ENCODE measurements at regions of chr2 and their contacts with region 1.

Region 1: GRCh38 chr2:97718051-97718882 is 4.9 kb downstream of the ZAP70 start:
- DNase-seq: peak; percentile 86
- ATAC-seq: peak; percentile 77
- H3K4me3 Mint-ChIP-seq: peak overlapping the region; percentile 71
- H3K27ac Mint-ChIP-seq: peak overlapping the region; percentile 95
- H3K4me1 Mint-ChIP-seq: peaks cover 68% of the 10 kb centered on the region
- H3K27me3 Mint-ChIP-seq: no peaks in the 10 kb centered on the region

Region 2: GRCh38 chr2:97740590-97741182 is 22.4 kb after region 1 on chr2:
- CTCF ChIA-PET with region 1: interaction called, 26 read pairs
- POLR2A ChIA-PET with region 1: interaction called, 3 read pairs
- intact Hi-C with region 1: loop called in 1 of 2 experiments (anchors 2 kb)
- DNase-seq: peak; percentile 73
- ATAC-seq: peak; percentile 25
- H3K4me3 Mint-ChIP-seq: no peak overlapping the region
- H3K27ac Mint-ChIP-seq: peak overlapping the region; percentile 59
- H3K4me1 Mint-ChIP-seq: peaks cover 43% of the 10 kb centered on the region
- H3K27me3 Mint-ChIP-seq: no peaks in the 10 kb centered on the region

Region 3: DNA sequence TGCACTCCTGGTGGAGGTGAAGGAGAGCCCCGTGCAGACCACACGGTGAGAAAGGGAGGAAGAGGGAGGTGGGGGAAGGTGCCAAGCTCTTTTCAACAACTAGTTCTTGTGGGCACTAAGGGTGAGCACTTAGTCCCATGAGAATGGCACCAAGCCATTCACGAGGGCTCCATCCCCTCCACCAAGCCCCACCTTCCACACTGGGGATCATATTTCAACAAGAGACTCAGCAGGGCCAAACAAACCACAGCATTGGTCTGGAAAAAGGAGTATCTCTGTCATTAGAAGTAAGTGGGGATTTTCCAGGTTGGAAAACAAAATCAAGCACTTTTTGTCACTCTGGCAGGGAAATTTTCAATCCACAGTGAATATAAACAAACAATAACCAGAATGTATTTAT is 33.5 kb after region 1 on chr2:
- CTCF ChIA-PET with region 1: interaction called, 12 read pairs
- POLR2A ChIA-PET with region 1: interaction called, 3 read pairs
- intact Hi-C with region 1: no loop called
- DNase-seq: no peak
- ATAC-seq: no peak
- H3K4me3 Mint-ChIP-seq: no peak overlapping the region
- H3K27ac Mint-ChIP-seq: no peak overlapping the region
- H3K4me1 Mint-ChIP-seq: peaks cover 14% of the 10 kb centered on the region
- H3K27me3 Mint-ChIP-seq: no peaks in the 10 kb centered on the region

Region 4: GRCh38 chr2:97798416-97798815 is 80.1 kb after region 1 on chr2:
- CTCF ChIA-PET with region 1: no interaction called
- POLR2A ChIA-PET with region 1: no interaction called
- intact Hi-C with region 1: no loop called
- DNase-seq: no peak
- ATAC-seq: no peak
- H3K4me3 Mint-ChIP-seq: no peak overlapping the region
- H3K27ac Mint-ChIP-seq: no peak overlapping the region
- H3K4me1 Mint-ChIP-seq: no peaks in the 10 kb centered on the region
- H3K27me3 Mint-ChIP-seq: no peaks in the 10 kb centered on the region

Region 5: GRCh38 chr2:97900806-97901205 is 182.5 kb after region 1 on chr2:
- CTCF ChIA-PET with region 1: no interaction called
- POLR2A ChIA-PET with region 1: no interaction called
- intact Hi-C with region 1: no loop called
- DNase-seq: no peak
- ATAC-seq: no peak
- H3K4me3 Mint-ChIP-seq: no peak overlapping the region
- H3K27ac Mint-ChIP-seq: no peak overlapping the region
- H3K4me1 Mint-ChIP-seq: peaks cover 6% of the 10 kb centered on the region
- H3K27me3 Mint-ChIP-seq: no peaks in the 10 kb centered on the region

Region 6: GRCh38 chr2:98385050-98385699 is 666.9 kb after region 1 on chr2:
- CTCF ChIA-PET with region 1: interaction called, 7 read pairs
- POLR2A ChIA-PET with region 1: no interaction called
- intact Hi-C with region 1: loop called in 1 of 2 experiments (anchors 10 kb)
- DNase-seq: peak; percentile 88
- ATAC-seq: peak; percentile 89
- H3K4me3 Mint-ChIP-seq: no peak overlapping the region
- H3K27ac Mint-ChIP-seq: no peak overlapping the region
- H3K4me1 Mint-ChIP-seq: peaks cover 3% of the 10 kb centered on the region
- H3K27me3 Mint-ChIP-seq: peaks cover 5% of the 10 kb centered on the region

Measured in activated CD4-positive, alpha-beta T cell treated with anti-CD3 and anti-CD28 coated beads for 36 hours (primary cell).